Lower leg skin (tissue), 4 donors: ENCODE measurements at regions of chr3 and their contacts with region 1.

Region 1: DNA sequence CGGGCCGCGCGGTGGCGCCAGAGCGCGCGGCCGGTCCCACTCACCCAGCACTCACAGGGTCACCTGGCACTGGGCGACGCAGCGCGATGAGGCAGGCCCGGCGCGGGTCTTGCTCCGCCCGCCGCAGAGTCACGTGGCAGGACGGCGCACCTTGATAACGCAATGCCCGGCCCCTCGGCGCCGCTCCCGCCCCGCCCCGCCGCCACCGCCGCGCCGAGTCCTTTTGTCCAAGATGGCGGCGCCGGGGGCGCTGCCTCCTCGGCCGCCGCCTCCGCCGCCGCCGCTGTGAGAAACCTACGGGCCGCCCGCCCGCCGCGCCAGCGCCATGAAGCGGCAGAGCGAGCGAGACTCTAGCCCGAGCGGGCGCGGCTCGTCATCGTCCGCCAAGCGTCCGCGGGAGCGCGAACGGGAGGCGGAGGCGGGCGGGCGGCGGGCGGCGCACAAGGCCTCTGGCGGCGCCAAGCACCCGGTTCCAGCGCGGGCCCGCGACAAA is at the start of gene RBM15B:
- DNase-seq: peak; percentile 96 to 99
- H3K4me3 ChIP-seq: peak within 1 kb of the TSS; percentile 73
- CTCF ChIP-seq: no peak
- POLR2A ChIP-seq: no peak
- total RNA-seq, gene RBM15B: 24.8 to 42.6 (median 39.5) TPM

Region 2: DNA sequence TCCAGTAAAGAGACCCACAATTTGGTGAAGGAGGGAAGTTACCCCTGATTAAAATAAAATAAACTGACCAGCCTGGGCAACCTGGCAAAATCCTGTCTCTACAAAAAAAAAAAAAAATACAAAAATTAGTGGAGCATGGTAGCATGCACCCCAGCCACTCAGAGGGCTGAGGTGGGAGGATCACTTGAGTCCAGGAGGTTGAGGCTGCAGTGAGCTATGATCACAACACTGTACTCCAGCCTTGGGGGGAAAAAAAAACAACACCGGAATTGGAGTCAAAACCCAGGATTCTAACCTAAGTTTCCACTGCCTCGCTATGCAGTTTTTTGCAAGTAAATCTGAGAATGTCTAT is 86.2 kb after region 1 on chr3:
- intact Hi-C with region 1: loop called (anchors 10 kb)
- DNase-seq: no peak
- H3K4me3 ChIP-seq: no peak overlapping the region
- CTCF ChIP-seq: no peak
- POLR2A ChIP-seq: no peak